ENCODE measurements at regions of chr2 and their contacts with region 1.

Region 1: DNA sequence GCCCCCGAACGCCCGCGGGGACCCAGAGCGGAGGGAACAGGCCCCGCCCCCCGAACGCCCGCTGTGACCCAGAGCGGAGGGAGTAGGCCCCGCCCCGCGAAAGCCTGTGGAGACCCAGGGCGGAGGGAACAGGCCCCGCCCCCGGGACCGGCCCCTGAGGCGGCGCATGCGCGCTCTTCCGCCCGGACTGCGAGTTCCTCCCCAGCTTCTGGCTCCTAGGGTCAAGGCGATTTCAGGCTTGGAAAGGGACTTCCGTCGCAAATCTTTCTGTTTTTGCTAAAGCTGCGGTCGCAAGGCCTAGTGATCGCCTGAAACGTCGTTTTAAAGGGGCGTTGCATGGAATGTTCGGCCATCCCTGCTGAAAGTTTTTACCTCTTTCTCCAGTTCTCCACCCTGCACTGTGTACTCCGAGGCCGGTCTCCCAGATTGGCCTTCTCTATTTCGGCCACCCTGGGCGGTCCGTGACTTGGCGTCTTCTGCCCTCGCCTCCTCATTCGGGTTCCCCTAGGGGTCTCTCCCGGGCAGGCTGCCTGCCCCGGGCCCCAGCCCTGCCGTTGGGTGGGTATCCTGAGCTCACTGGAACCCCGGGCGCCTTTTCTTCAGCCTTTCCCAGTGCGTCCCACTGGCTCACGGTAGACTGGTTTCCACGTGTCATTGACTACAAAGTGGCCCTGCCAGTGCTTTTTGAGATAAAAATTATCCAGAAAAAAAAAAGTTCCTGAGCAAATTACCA is 372 bp upstream of the WDSUB1 start:
- DNase-seq: peak; percentile 95 to 99 (median 97)
- H3K4me3 ChIP-seq: peak overlapping the region; percentile 69 to 100 (median 94)
- H3K27ac ChIP-seq: peak overlapping the region; percentile 7 to 97 (median 92)
- H3K27me3 ChIP-seq: no peaks in the 10 kb centered on the region
- CTCF ChIP-seq: peak in 8 of 56 donors; percentile 10 to 27 (median 19)

Region 2: DNA sequence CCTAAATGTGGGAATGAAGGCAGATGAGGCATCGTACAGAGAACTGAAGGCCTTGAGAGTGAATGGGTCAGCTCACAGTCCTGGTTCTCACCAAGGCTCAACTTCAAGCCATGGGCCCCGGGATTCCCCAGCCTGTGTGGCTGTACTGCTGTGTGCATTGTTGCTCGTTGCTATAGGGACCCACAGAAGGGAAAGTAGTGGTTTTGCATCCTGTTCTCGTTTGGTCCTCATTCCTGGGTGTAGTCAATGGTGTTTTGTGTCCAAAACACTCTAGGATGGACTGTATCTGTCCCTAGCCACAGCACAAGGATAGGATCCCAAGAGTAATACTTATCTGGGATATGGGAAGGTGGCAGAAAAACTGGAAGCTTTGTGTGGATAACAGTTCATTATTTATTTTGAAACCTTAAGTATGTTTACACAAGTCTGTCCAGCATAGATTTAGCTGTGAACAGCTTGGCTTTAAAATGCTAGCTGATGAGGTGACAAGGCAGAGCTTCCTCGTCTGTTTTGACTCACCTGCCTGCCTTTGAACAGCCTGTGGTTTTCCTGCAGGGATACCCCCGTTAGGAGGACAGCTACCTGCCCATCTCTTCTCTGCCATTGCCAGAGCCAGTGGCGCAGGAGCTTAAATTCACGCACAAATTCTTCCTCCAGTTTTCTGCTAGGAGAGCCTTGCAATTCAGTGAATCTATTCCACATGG is 85.4 kb before region 1 on chr2:
- intact Hi-C with region 1: loop called in 1 of 2 experiments (anchors 5 kb)
- DNase-seq: no peak
- H3K4me3 ChIP-seq: no peak overlapping the region
- H3K27ac ChIP-seq: peak overlapping the region in 3 of 59 donors; percentile 30 to 68 (median 57)
- H3K27me3 ChIP-seq: no peaks in the 10 kb centered on the region
- CTCF ChIP-seq: no peak

Region 3: GRCh38 chr2:159249984-159250715 is 36.7 kb before region 1 on chr2:
- intact Hi-C with region 1: loop called in 1 of 2 experiments (anchors 5 kb)
- DNase-seq: peak in 4 of 10 donors; percentile 53 to 66 (median 60)
- H3K4me3 ChIP-seq: peak overlapping the region in 25 of 59 donors; percentile 1 to 40 (median 16)
- H3K27ac ChIP-seq: peak overlapping the region in 55 of 59 donors; percentile 5 to 80 (median 68)
- H3K27me3 ChIP-seq: no peaks in the 10 kb centered on the region
- CTCF ChIP-seq: peak in 5 of 56 donors; percentile 17 to 31 (median 28)

Region 4: DNA sequence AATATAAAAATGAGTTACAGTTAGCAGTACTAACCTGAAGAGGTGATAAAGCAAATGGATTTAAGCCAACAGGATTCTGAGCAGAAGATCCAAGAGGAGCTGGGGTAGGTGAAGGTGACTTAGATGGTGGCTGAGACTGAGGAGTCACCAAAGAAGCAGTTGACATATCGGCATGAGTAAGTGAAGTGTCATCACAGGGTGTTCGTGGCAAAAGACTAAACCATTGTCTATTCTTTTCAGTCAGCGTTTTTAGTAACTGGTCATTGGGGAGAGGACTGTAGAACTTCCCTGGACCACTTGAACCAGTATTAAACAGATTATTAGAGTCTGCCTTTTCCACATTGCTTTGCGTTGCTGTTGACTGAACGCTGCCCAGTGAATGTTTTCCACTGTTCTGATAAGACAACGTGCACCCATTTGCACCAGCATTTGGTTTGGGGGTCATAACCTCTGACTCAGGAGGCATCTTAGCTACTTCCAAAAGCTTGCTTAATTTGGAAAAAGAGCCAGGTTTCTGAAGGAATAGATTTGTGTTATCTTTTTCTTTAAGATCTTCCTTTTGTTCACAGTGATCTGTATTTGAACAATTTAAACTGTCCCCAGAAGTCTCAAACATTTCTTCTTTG is 62.9 kb after region 1 on chr2:
- intact Hi-C with region 1: loop called in 1 of 2 experiments (anchors 10 kb)
- DNase-seq: no peak
- H3K4me3 ChIP-seq: no peak overlapping the region
- H3K27ac ChIP-seq: peak overlapping the region in 7 of 59 donors; percentile 1 to 38 (median 17)
- H3K27me3 ChIP-seq: no peaks in the 10 kb centered on the region
- CTCF ChIP-seq: no peak

Region 5: DNA sequence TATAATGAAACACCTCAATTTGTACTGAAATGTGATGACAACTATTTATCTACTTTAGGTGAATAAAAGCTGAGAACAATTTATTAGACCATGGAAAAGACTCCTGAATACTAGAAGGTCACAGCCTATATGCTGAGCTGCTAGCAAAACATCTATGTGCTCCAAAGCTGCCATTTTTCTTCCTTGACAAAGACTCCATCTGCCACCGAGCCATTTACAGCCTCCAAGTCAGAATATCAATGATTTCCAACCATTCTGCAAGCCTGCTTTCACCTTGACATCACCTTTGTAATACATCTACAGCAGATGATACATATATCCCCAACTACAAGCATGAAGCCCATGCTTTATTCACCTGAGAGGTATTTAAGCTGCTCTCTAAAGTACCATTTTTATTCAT is 244.6 kb after region 1 on chr2:
- intact Hi-C with region 1: no loop called
- DNase-seq: no peak
- H3K4me3 ChIP-seq: no peak overlapping the region
- H3K27ac ChIP-seq: no peak overlapping the region
- H3K27me3 ChIP-seq: no peaks in the 10 kb centered on the region
- CTCF ChIP-seq: no peak

Region 6: DNA sequence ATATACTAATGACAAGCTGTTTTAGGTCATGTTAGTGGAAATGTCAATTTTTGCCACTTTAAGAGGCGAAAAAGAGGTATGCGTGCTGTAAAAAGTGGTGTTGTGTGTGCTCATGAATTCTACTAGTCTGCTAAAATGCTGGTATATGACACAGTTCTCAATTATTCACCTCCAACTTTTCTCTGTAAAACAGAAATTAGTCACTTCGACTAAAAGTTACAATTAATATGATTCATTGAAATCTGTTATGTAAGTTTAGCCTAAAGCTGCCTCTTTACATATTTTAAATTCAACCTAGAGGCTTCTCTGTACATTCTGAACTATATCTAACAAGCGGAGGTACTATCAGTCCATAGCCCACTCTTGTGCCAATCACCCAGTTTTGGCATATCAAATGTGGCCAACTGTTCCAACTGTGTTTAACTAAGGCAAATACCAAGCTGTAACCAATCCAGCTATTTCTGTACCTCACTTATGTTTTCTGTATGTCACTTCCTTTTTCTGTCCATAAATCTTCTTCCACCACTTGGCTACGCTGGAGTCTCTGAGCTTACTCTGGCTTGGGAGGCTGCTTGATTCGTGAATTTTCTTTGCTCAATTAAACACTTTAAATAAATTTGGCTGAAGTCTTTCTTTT is 308.7 kb after region 1 on chr2:
- intact Hi-C with region 1: loop called in 1 of 2 experiments (anchors 10 kb)
- DNase-seq: peak in 1 of 10 donors; percentile 12
- H3K4me3 ChIP-seq: no peak overlapping the region
- H3K27ac ChIP-seq: peak overlapping the region in 16 of 59 donors; percentile 2 to 56 (median 24)
- H3K27me3 ChIP-seq: no peaks in the 10 kb centered on the region
- CTCF ChIP-seq: no peak

Region 7: GRCh38 chr2:159615140-159615951 is 328.5 kb after region 1 on chr2:
- intact Hi-C with region 1: loop called in 1 of 2 experiments (anchors 10 kb)
- DNase-seq: peak; percentile 57 to 89 (median 80)
- H3K4me3 ChIP-seq: peak overlapping the region; percentile 64 to 96 (median 79)
- H3K27ac ChIP-seq: peak overlapping the region; percentile 87 to 100 (median 98)
- H3K27me3 ChIP-seq: no peaks in the 10 kb centered on the region
- CTCF ChIP-seq: peak in 4 of 56 donors; percentile 6 to 15 (median 10)

Region 8: GRCh38 chr2:159712143-159712928 is 425.5 kb after region 1 on chr2 and contains the start of gene MARCHF7:
- intact Hi-C with region 1: loop called (anchors 2 to 5 kb)
- DNase-seq: peak; percentile 86 to 97 (median 94)
- H3K4me3 ChIP-seq: peak within 1 kb of the TSS; percentile 68 to 98 (median 92)
- H3K27ac ChIP-seq: peak within 1 kb of the TSS; percentile 84 to 99 (median 96)
- H3K27me3 ChIP-seq: no peaks in the 10 kb centered on the region
- CTCF ChIP-seq: peak in 54 of 56 donors; percentile 35 to 82 (median 60)
- total RNA-seq, gene MARCHF7: 45.9 to 95.4 (median 65.5) TPM

Region 9: GRCh38 chr2:159722580-159722979 is 435.7 kb after region 1 on chr2:
- intact Hi-C with region 1: no loop called
- DNase-seq: no peak
- H3K4me3 ChIP-seq: no peak overlapping the region
- H3K27ac ChIP-seq: no peak overlapping the region
- H3K27me3 ChIP-seq: no peaks in the 10 kb centered on the region
- CTCF ChIP-seq: no peak